ENCODE measurements at regions of chrX and their contacts with region 1.

Region 1: GRCh38 chrX:51743179-51743957 is at the start of gene GSPT2:
- DNase-seq: peak; percentile 43 to 57 (median 52)
- H3K4me3 ChIP-seq: peak within 1 kb of the TSS; percentile 52 to 66
- H3K4me3 Mint-ChIP-seq: peak within 1 kb of the TSS; percentile 85 to 93 (median 89)
- H3K27ac ChIP-seq: no peak within 1 kb of the TSS
- H3K27ac Mint-ChIP-seq: peak within 1 kb of the TSS; percentile 62 to 92 (median 82)
- H3K4me1 ChIP-seq: peaks cover 17% of the 10 kb centered on the region
- H3K4me1 Mint-ChIP-seq: peaks cover 8 to 24% (median 19%) of the 10 kb centered on the region in 4 donors
- H3K27me3 ChIP-seq: no peaks in the 10 kb centered on the region
- H3K27me3 Mint-ChIP-seq: peaks cover 0 to 4% of the 10 kb centered on the region in 2 donors
- total RNA-seq, gene GSPT2: 12.0 to 13.1 TPM

Region 2: DNA sequence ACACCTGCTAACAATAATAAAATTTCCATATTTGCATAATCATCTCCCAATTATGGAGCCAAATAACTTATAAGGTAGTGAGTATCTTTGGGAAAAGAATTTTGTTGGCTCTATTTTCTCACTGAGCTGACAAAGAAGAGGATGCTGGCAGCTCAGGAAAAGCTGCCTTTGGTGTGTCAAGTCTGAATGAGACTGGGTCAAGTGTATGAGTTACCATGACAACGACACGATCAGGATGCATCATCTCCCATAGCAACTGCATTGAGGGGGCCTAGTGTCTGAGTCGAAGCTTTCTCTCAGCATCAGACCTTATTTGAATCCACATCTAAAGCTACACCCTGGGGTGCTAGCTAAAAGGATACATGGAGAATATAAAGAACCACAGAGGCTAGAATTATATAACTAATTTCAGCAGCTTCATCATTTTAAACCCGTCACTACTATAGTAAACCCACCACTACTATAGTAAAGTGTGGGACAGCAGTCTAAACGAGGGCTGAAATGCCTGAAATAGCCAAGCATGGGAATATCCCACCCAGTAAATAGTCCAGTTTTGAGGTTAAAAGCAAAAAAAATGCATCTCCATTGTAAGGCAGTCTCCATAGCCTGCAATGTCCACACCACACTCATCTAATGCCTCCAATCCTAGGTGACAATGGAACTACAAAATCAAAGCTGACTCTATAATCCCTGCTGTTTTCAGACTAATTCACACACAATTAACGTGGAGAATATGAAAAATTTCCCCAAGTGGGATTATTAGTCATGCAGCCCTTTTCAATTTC is 15.9 kb after region 1 on chrX:
- CTCF ChIA-PET with region 1: no interaction called
- POLR2A ChIA-PET with region 1: no interaction called
- intact Hi-C with region 1: no loop called
- DNase-seq: no peak
- H3K4me3 ChIP-seq: no peak overlapping the region
- H3K4me3 Mint-ChIP-seq: no peak overlapping the region
- H3K27ac ChIP-seq: no peak overlapping the region
- H3K27ac Mint-ChIP-seq: no peak overlapping the region
- H3K4me1 ChIP-seq: no peaks in the 10 kb centered on the region
- H3K4me1 Mint-ChIP-seq: no peaks in the 10 kb centered on the region
- H3K27me3 ChIP-seq: peaks cover 3% of the 10 kb centered on the region
- H3K27me3 Mint-ChIP-seq: peaks cover 1 to 3% of the 10 kb centered on the region in 2 donors

Region 3: GRCh38 chrX:51802917-51803688 is 59.7 kb after region 1 on chrX:
- CTCF ChIA-PET with region 1: no interaction called
- POLR2A ChIA-PET with region 1: interaction called, 8 read pairs
- intact Hi-C with region 1: loop called (anchors 2 kb)
- DNase-seq: peak; percentile 43 to 62 (median 48)
- H3K4me3 ChIP-seq: peak overlapping the region; percentile 52 to 57
- H3K4me3 Mint-ChIP-seq: peak overlapping the region; percentile 92 to 99 (median 97)
- H3K27ac ChIP-seq: peak overlapping the region; percentile 56
- H3K27ac Mint-ChIP-seq: peak overlapping the region; percentile 90 to 99 (median 95)
- H3K4me1 ChIP-seq: peaks cover 17% of the 10 kb centered on the region
- H3K4me1 Mint-ChIP-seq: peaks cover 15 to 24% (median 16%) of the 10 kb centered on the region in 4 donors
- H3K27me3 ChIP-seq: no peaks in the 10 kb centered on the region
- H3K27me3 Mint-ChIP-seq: no peaks in the 10 kb centered on the region

Region 4: DNA sequence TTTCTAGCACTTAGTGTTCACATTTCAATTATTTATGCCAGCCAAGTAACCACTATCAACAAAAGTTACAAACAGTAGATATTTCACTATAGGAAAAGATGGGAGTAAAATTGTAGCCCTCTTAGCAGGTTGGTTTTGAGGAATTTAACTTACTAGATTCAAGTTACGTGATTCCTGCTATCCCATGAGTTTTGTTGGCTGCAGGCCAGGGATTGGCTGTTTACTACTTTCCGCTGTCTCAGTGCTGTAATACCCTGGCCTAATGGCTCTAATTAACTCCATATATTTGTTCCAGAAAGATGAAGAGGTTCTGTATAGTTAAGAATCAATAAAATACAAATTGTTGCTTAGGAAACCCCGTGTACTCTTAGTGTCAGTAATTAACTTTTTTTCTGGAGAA is 94.6 kb after region 1 on chrX:
- CTCF ChIA-PET with region 1: no interaction called
- POLR2A ChIA-PET with region 1: no interaction called
- intact Hi-C with region 1: no loop called
- DNase-seq: no peak
- H3K4me3 ChIP-seq: no peak overlapping the region
- H3K4me3 Mint-ChIP-seq: no peak overlapping the region
- H3K27ac ChIP-seq: no peak overlapping the region
- H3K27ac Mint-ChIP-seq: no peak overlapping the region
- H3K4me1 ChIP-seq: no peaks in the 10 kb centered on the region
- H3K4me1 Mint-ChIP-seq: peaks cover 0 to 6% (median 5%) of the 10 kb centered on the region in 4 donors
- H3K27me3 ChIP-seq: no peaks in the 10 kb centered on the region
- H3K27me3 Mint-ChIP-seq: no peaks in the 10 kb centered on the region